Activated CD4-positive, alpha-beta T cell treated with anti-CD3 and anti-CD28 coated beads for 36 hours (primary cell): ENCODE measurements at regions of chr2 and their contacts with region 1.

Region 1: DNA sequence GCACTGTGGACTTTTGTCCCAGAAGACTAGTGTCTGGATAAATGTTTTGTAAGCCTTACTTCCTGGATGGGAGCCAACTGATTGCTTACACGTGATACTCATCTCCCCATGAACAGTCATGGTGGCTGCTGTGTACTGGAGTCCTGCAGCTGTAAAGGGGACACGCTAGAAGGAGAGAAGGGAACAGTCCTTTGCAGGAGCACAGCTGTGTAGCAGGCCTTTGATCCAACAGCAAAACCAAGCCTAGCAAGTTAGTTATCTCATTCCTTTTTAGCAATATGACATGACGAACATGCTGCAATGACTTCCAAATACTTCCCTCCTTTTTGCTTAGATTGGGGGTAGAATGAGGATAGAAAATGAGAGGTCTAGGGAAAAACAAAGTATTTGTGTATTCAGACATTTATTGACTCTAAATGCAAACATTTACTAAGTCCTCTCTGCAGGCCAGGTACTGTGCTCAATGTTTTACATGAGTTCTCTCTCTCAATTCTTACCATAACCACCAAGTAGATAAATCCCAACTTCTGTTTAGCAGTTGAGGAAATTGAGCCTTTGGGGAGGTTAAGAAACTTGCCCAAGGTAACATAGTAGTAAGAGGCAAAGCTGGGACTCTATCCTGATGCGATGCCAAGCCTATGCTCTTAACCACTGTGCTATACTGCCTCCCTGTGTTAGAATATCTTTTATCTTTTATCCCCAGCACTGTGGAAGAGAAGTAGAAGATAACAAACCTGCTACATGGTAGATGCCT is 55.4 kb upstream of the CD28 start:
- DNase-seq: peak; percentile 20
- ATAC-seq: peak; percentile 90
- H3K4me3 Mint-ChIP-seq: no peak overlapping the region
- H3K27ac Mint-ChIP-seq: no peak overlapping the region
- H3K4me1 Mint-ChIP-seq: peaks cover 20% of the 10 kb centered on the region
- H3K27me3 Mint-ChIP-seq: no peaks in the 10 kb centered on the region

Region 2: DNA sequence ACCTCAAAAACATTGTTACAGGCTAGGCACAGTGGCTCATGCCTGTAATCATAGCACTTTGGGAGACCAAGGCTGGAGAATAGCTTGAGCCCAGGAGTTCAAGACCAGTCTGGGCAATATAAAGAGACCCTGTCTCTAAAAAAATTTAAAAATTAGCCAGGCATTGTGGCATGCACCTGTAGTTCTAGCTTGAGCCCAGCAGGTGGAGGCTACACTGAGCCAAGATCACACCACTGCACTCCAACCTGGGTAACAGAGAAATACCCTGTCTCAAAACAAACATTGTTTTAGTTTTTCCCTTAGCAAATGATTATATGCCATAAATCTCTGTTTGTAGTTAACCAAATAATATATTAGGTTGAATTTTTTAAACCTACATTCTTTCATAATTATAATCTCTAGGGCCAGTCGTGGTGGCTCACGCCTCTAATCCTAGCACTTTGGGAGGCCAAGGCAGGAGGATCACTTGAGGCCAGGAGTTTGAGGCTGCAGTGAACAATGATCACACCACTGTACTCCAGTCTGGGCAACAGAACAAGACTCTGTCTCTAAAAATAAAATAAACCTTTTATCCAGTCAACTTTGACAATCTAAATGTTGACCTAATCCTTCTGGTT is 425.5 kb before region 1 on chr2:
- CTCF ChIA-PET with region 1: no interaction called
- POLR2A ChIA-PET with region 1: no interaction called
- intact Hi-C with region 1: loop called (anchors 2 to 5 kb)
- DNase-seq: peak; percentile 51
- ATAC-seq: peak; percentile 81
- H3K4me3 Mint-ChIP-seq: no peak overlapping the region
- H3K27ac Mint-ChIP-seq: no peak overlapping the region
- H3K4me1 Mint-ChIP-seq: no peaks in the 10 kb centered on the region
- H3K27me3 Mint-ChIP-seq: no peaks in the 10 kb centered on the region

Region 3: GRCh38 chr2:203567691-203568090 is 83.3 kb before region 1 on chr2:
- CTCF ChIA-PET with region 1: no interaction called
- POLR2A ChIA-PET with region 1: no interaction called
- intact Hi-C with region 1: no loop called
- DNase-seq: no peak
- ATAC-seq: no peak
- H3K4me3 Mint-ChIP-seq: no peak overlapping the region
- H3K27ac Mint-ChIP-seq: no peak overlapping the region
- H3K4me1 Mint-ChIP-seq: peaks cover 2% of the 10 kb centered on the region
- H3K27me3 Mint-ChIP-seq: no peaks in the 10 kb centered on the region